Activated naive CD4-positive, alpha-beta T cell treated with anti-CD3 and anti-CD28 coated beads, Interleukin-2, amount 10 ng/mL, durations not matched to agents 7 days and 5 days (primary cell): ENCODE measurements at regions of chr16 and their contacts with region 1.

Region 1: GRCh38 chr16:82229796-82230619 is 60.0 kb upstream of the MPHOSPH6 start:
- DNase-seq: peak; percentile 69
- H3K4me3 Mint-ChIP-seq: no peak overlapping the region
- H3K27ac Mint-ChIP-seq: no peak overlapping the region
- H3K4me1 Mint-ChIP-seq: no peaks in the 10 kb centered on the region
- H3K27me3 Mint-ChIP-seq: peaks cover 7% of the 10 kb centered on the region

Region 2: GRCh38 chr16:81891736-81892357 is 338.2 kb before region 1 on chr16:
- CTCF ChIA-PET with region 1: interaction called, 29 read pairs
- DNase-seq: no peak
- H3K4me3 Mint-ChIP-seq: no peak overlapping the region
- H3K27ac Mint-ChIP-seq: no peak overlapping the region
- H3K4me1 Mint-ChIP-seq: no peaks in the 10 kb centered on the region
- H3K27me3 Mint-ChIP-seq: no peaks in the 10 kb centered on the region

Region 3: DNA sequence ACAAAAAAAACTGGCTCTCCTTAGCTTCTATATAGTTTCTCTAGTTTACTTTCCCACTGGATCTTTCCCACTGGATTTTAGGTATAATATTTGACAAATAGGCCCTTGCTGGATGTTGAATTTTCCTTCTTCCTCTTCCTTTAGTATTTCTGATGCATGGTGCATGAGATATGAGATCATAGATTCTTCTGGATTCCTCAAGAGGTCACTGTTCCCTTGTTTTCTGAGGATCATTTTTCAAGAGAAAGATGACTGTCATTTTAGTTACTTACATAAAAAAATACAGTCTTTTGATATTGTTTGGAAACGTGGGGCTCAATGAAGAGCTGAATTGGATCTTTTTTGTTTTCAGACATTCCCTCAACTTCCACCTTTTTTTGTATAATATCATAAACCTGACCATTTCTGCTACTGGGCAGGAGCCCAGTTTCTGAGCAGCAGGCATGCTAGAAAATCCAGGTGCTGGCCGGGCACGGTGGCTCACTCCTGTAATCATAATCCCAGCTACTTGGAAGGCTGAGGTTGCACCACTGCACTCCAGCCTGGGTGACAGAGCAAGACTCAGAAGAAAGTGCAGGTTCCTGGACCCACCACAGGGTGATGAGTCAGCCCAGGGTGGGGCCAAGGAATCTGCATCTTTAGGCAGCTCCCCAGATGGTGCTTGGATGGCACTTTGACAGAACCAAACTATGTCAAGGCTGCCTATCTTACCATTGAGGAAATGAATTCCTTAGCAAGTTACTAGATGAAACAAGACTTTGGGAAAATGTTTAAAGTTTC is 289.0 kb before region 1 on chr16:
- CTCF ChIA-PET with region 1: interaction called, 22 read pairs
- DNase-seq: no peak
- H3K4me3 Mint-ChIP-seq: no peak overlapping the region
- H3K27ac Mint-ChIP-seq: no peak overlapping the region
- H3K4me1 Mint-ChIP-seq: no peaks in the 10 kb centered on the region
- H3K27me3 Mint-ChIP-seq: no peaks in the 10 kb centered on the region

Region 4: DNA sequence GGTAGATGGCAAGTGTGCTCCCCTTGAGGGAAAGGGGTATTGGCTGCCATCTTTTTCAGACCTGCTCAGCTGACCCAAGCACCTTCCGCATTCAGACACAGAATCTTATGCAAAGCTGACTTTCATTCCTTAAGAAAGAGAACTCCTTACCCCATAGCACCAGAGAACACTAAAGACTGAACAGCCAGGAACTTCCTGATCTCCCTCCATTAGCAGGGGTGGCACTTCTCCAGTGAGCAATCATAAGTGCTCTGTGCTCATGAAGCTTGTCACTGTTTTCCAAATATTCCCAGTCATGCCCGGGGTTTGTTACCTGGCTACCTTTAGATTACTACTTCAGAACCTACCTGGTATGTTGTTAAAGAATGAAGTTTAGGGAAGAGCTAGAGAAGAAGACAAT is 183.1 kb before region 1 on chr16:
- CTCF ChIA-PET with region 1: no interaction called
- DNase-seq: no peak
- H3K4me3 Mint-ChIP-seq: no peak overlapping the region
- H3K27ac Mint-ChIP-seq: no peak overlapping the region
- H3K4me1 Mint-ChIP-seq: no peaks in the 10 kb centered on the region
- H3K27me3 Mint-ChIP-seq: peaks cover 4% of the 10 kb centered on the region

Region 5: GRCh38 chr16:82169861-82170845 is 59.9 kb before region 1 on chr16 and contains the start of gene MPHOSPH6:
- CTCF ChIA-PET with region 1: no interaction called
- DNase-seq: peak; percentile 93
- H3K4me3 Mint-ChIP-seq: peak within 1 kb of the TSS; percentile 91
- H3K27ac Mint-ChIP-seq: peak within 1 kb of the TSS; percentile 94
- H3K4me1 Mint-ChIP-seq: peaks cover 23% of the 10 kb centered on the region
- H3K27me3 Mint-ChIP-seq: peaks cover 43% of the 10 kb centered on the region

Region 6: GRCh38 chr16:82240111-82240510 is 10.1 kb after region 1 on chr16:
- CTCF ChIA-PET with region 1: interaction called, 18 read pairs
- DNase-seq: no peak
- H3K4me3 Mint-ChIP-seq: no peak overlapping the region
- H3K27ac Mint-ChIP-seq: no peak overlapping the region
- H3K4me1 Mint-ChIP-seq: no peaks in the 10 kb centered on the region
- H3K27me3 Mint-ChIP-seq: peaks cover 17% of the 10 kb centered on the region